T-cell (primary cell): ENCODE measurements at regions of chr12 and their contacts with region 1.

Region 1: GRCh38 chr12:61213631-61214030 is 1046.6 kb upstream of the USP15 start:
- DNase-seq: no peak
- ATAC-seq: no peak
- H3K4me3 ChIP-seq: no peak overlapping the region
- H3K4me3 Mint-ChIP-seq: no peak overlapping the region
- H3K27ac ChIP-seq: no peak overlapping the region
- H3K27ac Mint-ChIP-seq: no peak overlapping the region
- H3K4me1 ChIP-seq: no peaks in the 10 kb centered on the region
- H3K4me1 Mint-ChIP-seq: no peaks in the 10 kb centered on the region
- H3K27me3 ChIP-seq: no peaks in the 10 kb centered on the region
- H3K27me3 Mint-ChIP-seq: no peaks in the 10 kb centered on the region

Region 2: DNA sequence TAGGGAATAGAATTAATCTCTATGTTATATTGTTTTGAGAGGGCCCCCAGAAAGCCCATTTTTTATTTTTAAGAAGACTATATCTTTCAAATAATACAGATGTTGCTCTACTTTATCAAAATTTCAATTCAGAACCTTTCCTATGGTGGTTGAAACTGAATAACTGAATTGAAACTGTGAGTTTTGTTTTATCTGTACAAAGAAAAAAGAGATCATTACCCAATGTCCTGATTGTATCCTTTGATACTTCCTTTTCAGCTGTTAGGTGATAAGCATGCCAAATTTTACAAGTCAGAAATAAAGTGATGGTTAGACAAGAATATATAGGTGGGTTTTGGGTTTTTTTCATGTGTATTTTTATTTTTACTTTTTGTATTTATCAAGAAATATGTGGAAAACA is 246.5 kb before region 1 on chr12:
- CTCF ChIA-PET with region 1: no interaction called
- POLR2A ChIA-PET with region 1: no interaction called
- DNase-seq: no peak
- ATAC-seq: no peak
- H3K4me3 ChIP-seq: no peak overlapping the region
- H3K4me3 Mint-ChIP-seq: no peak overlapping the region
- H3K27ac ChIP-seq: no peak overlapping the region
- H3K27ac Mint-ChIP-seq: no peak overlapping the region
- H3K4me1 ChIP-seq: no peaks in the 10 kb centered on the region
- H3K4me1 Mint-ChIP-seq: no peaks in the 10 kb centered on the region
- H3K27me3 ChIP-seq: no peaks in the 10 kb centered on the region
- H3K27me3 Mint-ChIP-seq: no peaks in the 10 kb centered on the region

Region 3: GRCh38 chr12:61188801-61189595 is 24.6 kb before region 1 on chr12:
- CTCF ChIA-PET with region 1: interaction called in 1 of 2 experiments, 10 read pairs
- POLR2A ChIA-PET with region 1: no interaction called
- DNase-seq: no peak
- ATAC-seq: no peak
- H3K4me3 ChIP-seq: no peak overlapping the region
- H3K4me3 Mint-ChIP-seq: no peak overlapping the region
- H3K27ac ChIP-seq: no peak overlapping the region
- H3K27ac Mint-ChIP-seq: no peak overlapping the region
- H3K4me1 ChIP-seq: no peaks in the 10 kb centered on the region
- H3K4me1 Mint-ChIP-seq: no peaks in the 10 kb centered on the region
- H3K27me3 ChIP-seq: no peaks in the 10 kb centered on the region
- H3K27me3 Mint-ChIP-seq: no peaks in the 10 kb centered on the region